CD4-positive, alpha-beta T cell (primary cell): ENCODE measurements at regions of chr14 and their contacts with region 1.

Region 1: GRCh38 chr14:96297000-96297399 is 41.0 kb downstream of the BDKRB1 start:
- DNase-seq: peak in 3 of 14 experiments; percentile 40 to 50 (median 43)
- ATAC-seq: no peak
- H3K4me3 ChIP-seq: no peak overlapping the region
- H3K4me3 Mint-ChIP-seq: no peak overlapping the region
- H3K27ac ChIP-seq: no peak overlapping the region
- H3K27ac Mint-ChIP-seq: no peak overlapping the region
- H3K4me1 ChIP-seq: no peaks in the 10 kb centered on the region
- H3K4me1 Mint-ChIP-seq: no peaks in the 10 kb centered on the region
- H3K27me3 ChIP-seq: no peaks in the 10 kb centered on the region
- H3K27me3 Mint-ChIP-seq: no peaks in the 10 kb centered on the region
- CTCF ChIP-seq: peak; percentile 51

Region 2: DNA sequence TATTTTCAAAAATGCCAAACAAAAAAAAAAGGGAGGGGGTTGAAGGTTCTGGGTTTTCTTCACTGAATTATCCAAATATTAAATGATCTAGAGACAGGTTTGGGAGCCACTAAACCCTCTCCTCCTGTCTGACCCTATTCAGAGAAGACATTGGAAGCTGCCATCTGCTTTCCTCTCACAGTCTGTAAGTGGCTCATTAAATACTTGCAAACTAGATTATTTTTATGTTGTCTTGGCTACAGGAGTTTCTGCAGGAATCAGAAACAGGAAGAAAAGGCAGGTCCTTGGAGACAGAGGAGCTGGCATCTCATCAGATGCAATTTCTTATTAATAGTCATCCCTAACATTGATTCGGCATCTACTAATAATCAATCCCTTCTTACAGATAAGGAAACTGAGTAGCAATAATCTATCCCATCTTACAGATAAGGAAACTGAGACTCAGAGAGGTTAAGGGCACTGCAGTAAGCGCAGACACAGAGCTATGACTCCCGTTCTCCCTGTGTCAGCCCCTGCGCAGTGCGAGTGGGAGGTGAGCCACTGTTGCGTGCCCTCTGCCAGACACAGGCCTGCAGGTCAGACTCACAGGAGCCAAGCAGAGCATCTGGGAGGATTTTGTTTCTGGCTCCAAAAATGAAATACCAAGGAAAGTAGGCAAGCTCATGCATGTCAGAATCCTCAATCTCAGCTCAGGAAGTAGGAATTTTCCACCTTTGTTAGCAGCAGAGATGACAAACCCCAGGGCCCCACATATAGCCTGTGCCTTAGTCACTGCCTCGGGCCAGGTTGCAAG is 81.4 kb before region 1 on chr14:
- CTCF ChIA-PET with region 1: no interaction called
- POLR2A ChIA-PET with region 1: no interaction called
- intact Hi-C with region 1: no loop called
- DNase-seq: no peak
- ATAC-seq: no peak
- H3K4me3 ChIP-seq: no peak overlapping the region
- H3K4me3 Mint-ChIP-seq: no peak overlapping the region
- H3K27ac ChIP-seq: no peak overlapping the region
- H3K27ac Mint-ChIP-seq: no peak overlapping the region
- H3K4me1 ChIP-seq: no peaks in the 10 kb centered on the region
- H3K4me1 Mint-ChIP-seq: no peaks in the 10 kb centered on the region
- H3K27me3 ChIP-seq: peaks cover 0 to 7% of the 10 kb centered on the region in 2 experiments
- H3K27me3 Mint-ChIP-seq: peaks cover 7% of the 10 kb centered on the region
- CTCF ChIP-seq: no peak

Region 3: DNA sequence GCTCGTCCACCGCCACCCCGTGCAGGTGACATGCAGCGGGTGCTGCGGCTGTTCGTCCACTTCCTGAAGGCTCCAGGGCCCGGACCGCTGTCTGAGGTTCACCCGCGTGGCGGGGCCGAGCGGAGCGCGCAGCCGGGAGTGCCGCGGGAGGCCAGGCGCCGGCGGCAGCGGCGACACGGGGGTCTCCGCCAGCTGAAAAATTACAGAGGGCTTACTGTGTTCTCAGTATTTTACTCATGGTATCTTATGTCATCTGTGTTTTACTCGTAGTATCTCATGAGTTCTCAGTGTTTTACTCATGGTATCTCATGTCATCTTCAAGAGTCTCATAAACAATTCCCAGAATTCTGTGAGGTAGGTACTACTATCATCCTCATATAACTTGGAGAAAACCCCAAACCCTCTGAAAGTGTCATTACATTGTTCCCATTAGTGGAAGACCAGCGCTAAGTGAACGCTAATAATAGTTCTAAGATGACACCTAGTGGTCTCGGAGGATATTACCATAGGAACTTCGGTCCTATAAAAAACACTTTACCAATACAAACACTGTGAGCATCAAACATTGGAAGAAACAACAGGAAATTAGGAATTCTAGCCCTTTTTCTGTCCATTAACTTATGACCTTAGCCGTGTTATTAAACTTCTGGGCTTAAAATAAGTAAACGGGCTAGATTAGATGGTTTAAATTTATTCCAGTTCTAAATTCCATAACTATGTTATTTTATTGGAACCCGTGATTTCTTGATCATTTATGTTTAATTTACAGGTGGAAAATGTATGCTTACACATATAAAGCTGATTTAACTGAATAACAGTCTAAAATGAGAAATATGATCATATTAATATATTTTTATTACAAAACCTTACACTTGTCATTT is 127.3 kb after region 1 on chr14:
- CTCF ChIA-PET with region 1: no interaction called
- POLR2A ChIA-PET with region 1: no interaction called
- intact Hi-C with region 1: loop called (anchors 1 kb)
- DNase-seq: peak in 7 of 14 experiments; percentile 1 to 78 (median 37)
- ATAC-seq: peak; percentile 78
- H3K4me3 ChIP-seq: peak overlapping the region; percentile 42
- H3K4me3 Mint-ChIP-seq: peak overlapping the region; percentile 77
- H3K27ac ChIP-seq: no peak overlapping the region
- H3K27ac Mint-ChIP-seq: no peak overlapping the region
- H3K4me1 ChIP-seq: peaks cover 8% of the 10 kb centered on the region
- H3K4me1 Mint-ChIP-seq: no peaks in the 10 kb centered on the region
- H3K27me3 ChIP-seq: no peaks in the 10 kb centered on the region
- H3K27me3 Mint-ChIP-seq: peaks cover 12% of the 10 kb centered on the region
- CTCF ChIP-seq: peak; percentile 92